OCI-LY7 (cell line): ENCODE measurements at regions of chr5 and their contacts with region 1.

Region 1: DNA sequence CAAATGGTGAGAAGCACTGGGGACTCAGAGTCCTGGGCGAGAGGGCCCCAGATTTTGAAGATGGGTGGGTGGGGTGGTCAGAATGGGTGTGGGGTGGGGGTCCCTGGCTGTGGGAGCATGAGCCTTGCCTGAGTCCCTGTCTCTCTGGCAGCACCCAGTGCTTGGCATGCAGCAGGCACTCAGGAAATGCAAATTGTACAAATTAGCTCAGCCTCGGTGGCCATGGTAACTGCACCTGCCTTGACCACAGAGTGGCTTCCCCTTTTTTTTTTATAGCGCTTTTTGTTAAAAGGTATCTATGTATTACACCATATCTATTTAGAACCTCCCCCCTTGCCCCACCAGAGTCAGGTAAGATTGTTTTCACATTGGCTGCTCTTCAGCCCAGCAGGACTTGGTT is 19.2 kb upstream of the PITX1 start:
- DNase-seq: peak; percentile 98
- H3K4me3 ChIP-seq: peak overlapping the region; percentile 61
- H3K27ac ChIP-seq: peak overlapping the region; percentile 97
- H3K4me1 ChIP-seq: peaks cover 98% of the 10 kb centered on the region
- CTCF ChIP-seq: no peak

Region 2: GRCh38 chr5:134994560-134995156 is 58.6 kb before region 1 on chr5:
- CTCF ChIA-PET with region 1: no interaction called
- POLR2A ChIA-PET with region 1: no interaction called
- intact Hi-C with region 1: no loop called
- DNase-seq: peak; percentile 25
- H3K4me3 ChIP-seq: no peak overlapping the region
- H3K27ac ChIP-seq: no peak overlapping the region
- H3K4me1 ChIP-seq: peaks cover 6% of the 10 kb centered on the region
- CTCF ChIP-seq: no peak

Region 3: GRCh38 chr5:135063631-135064570 is 10.6 kb after region 1 on chr5:
- CTCF ChIA-PET with region 1: interaction called, 3 read pairs
- POLR2A ChIA-PET with region 1: interaction called, 18 read pairs
- intact Hi-C with region 1: no loop called
- DNase-seq: no peak
- H3K4me3 ChIP-seq: no peak overlapping the region
- H3K27ac ChIP-seq: no peak overlapping the region
- H3K4me1 ChIP-seq: peaks cover 44% of the 10 kb centered on the region
- CTCF ChIP-seq: no peak

Region 4: GRCh38 chr5:135174315-135175096 is 121.2 kb after region 1 on chr5:
- CTCF ChIA-PET with region 1: no interaction called
- POLR2A ChIA-PET with region 1: interaction called, 4 read pairs
- intact Hi-C with region 1: loop called (anchors 5 kb)
- DNase-seq: no peak
- H3K4me3 ChIP-seq: no peak overlapping the region
- H3K27ac ChIP-seq: no peak overlapping the region
- H3K4me1 ChIP-seq: peaks cover 26% of the 10 kb centered on the region
- CTCF ChIP-seq: peak; percentile 48; the same call in 1 of the 2 replicates